ENCODE measurements at regions of chr4 and their contacts with region 1.

Region 1: DNA sequence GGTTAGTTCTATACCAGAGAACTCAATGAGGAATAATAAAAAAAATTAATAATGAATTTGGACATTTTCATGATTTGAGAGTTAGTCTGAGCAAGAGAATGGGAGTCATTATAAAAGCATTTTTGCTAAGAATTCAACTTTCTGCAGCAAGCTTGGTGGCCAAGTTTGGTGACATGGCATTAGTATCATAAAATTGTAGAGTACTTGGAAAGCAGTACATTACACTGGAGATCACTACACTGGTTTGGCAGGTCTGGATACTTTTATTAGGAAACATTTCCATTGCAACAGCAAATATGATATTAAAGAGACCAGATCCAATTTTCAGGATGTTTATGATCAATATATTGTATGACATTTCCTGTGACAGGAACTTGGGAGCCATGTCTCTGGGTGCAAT is 249.1 kb upstream of the INTU start:
- DNase-seq: no peak
- H3K4me3 ChIP-seq: no peak overlapping the region
- H3K27ac ChIP-seq: no peak overlapping the region
- H3K4me1 ChIP-seq: no peaks in the 10 kb centered on the region
- H3K27me3 ChIP-seq: no peaks in the 10 kb centered on the region
- CTCF ChIP-seq: no peak

Region 2: GRCh38 chr4:127347936-127348335 is 35.7 kb before region 1 on chr4:
- CTCF ChIA-PET with region 1: no interaction called
- dilution Hi-C with region 1: no loop called
- in situ Hi-C with region 1: no loop called
- intact Hi-C with region 1: loop called (anchors 1 kb)
- DNase-seq: no peak
- H3K4me3 ChIP-seq: no peak overlapping the region
- H3K27ac ChIP-seq: no peak overlapping the region
- H3K4me1 ChIP-seq: no peaks in the 10 kb centered on the region
- H3K27me3 ChIP-seq: no peaks in the 10 kb centered on the region
- CTCF ChIP-seq: no peak

Measured in mammary epithelial cell (primary cell).